Adrenal gland (tissue), 19 donors: ENCODE measurements at regions of chr20 and their contacts with region 1.

Region 1: DNA sequence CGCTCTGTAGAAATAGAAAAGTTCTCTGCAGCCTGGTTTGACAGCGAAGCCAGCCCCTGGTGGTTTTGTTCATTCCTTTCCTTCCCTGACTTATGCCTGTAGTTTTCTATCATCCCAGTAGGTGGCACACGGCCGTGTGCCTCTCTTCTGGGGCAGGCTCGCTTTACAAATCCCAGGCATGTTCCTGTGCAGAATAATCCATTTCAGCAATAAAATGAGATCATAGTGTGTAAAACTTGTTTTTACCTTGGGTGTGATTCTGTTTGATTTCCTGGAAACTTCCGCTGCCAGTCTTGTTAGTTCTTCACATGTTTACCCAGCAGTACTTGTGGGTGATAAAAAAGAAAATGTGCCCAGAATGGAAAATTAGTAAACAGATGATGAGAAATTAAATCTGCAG is 7.4 kb upstream of the INSM1 start:
- DNase-seq: peak; percentile 32 to 78 (median 50)
- H3K4me3 ChIP-seq: no peak overlapping the region
- H3K27ac ChIP-seq: no peak overlapping the region
- H3K4me1 ChIP-seq: peaks cover 0 to 7% of the 10 kb centered on the region in 2 donors
- H3K27me3 ChIP-seq: peaks cover 31% of the 10 kb centered on the region
- CTCF ChIP-seq: peak; percentile 66 to 86 (median 76)
- POLR2A ChIP-seq: no peak

Region 2: DNA sequence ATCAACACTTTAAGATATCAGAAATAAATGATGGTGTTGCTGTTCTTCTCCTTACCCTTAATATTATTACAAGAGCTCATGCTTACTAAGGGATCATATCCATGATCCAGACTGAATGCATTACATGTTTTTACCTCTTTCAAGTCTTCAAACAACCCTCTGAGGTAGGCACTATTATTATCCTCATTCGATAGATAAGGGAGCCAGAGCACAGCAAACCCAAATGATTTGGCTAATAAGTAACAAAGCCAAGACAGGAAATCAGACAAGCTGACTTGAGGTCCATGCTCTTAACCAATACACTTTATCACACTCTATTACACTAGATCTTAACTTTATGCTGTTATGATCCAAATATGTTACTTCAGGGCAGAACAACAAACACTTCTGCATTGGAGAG is 206.1 kb after region 1 on chr20:
- intact Hi-C with region 1: loop called (anchors 2 to 10 kb)
- DNase-seq: no peak
- H3K4me3 ChIP-seq: no peak overlapping the region
- H3K27ac ChIP-seq: no peak overlapping the region
- H3K4me1 ChIP-seq: no peaks in the 10 kb centered on the region
- H3K27me3 ChIP-seq: no peaks in the 10 kb centered on the region
- CTCF ChIP-seq: no peak
- POLR2A ChIP-seq: no peak

Region 3: GRCh38 chr20:20593447-20594170 is 233.1 kb after region 1 on chr20:
- intact Hi-C with region 1: loop called in 1 of 2 experiments (anchors 10 kb)
- DNase-seq: peak; percentile 14 to 78 (median 34)
- H3K4me3 ChIP-seq: no peak overlapping the region
- H3K27ac ChIP-seq: peak overlapping the region in 1 of 5 donors; percentile 11
- H3K4me1 ChIP-seq: peaks cover 0 to 9% of the 10 kb centered on the region in 2 donors
- H3K27me3 ChIP-seq: no peaks in the 10 kb centered on the region
- CTCF ChIP-seq: peak; percentile 24 to 41 (median 29)
- POLR2A ChIP-seq: no peak